CD14-positive monocyte (primary cell): ENCODE measurements at regions of chr19 and their contacts with region 1.

Region 1: DNA sequence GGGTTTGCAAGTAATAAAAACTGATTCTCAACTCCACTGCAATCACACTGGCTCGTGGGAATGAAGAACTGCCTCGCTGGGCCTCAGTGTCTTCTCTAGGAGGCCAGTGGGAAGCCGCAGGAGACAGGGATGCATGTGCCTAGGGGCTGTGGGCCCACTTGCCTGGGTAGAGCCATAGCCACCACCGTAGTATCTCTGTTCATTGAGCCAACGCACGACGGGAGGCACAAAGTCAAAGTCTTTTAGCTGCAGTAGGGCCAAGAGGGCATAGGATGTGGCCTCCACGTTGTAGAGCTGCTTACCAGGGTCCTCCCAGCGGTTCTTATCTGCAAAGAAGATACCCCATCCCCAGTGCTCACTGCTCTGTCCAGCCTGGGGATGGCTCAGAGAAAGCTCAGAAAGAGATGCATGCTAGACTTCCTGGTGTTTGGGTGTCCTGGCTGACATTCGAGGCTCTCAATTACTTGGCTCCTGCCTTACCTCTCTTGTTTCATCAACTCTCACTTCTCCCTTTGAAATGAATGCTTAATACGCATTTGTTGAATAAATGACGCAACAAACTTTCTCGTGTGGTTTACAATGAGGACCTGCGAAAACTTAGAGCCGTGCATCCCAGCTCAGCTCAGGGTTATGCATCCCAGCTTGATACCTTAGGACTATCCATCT is 16.1 kb upstream of the TNFSF14 start:
- DNase-seq: peak in 2 of 3 donors; percentile 61 to 62
- H3K4me3 ChIP-seq: no peak overlapping the region
- H3K4me3 Mint-ChIP-seq: no peak overlapping the region
- H3K27ac ChIP-seq: no peak overlapping the region
- H3K27ac Mint-ChIP-seq: peak overlapping the region in 3 of 7 donors; percentile 42 to 59 (median 56)
- H3K4me1 ChIP-seq: peaks cover 17 to 22% of the 10 kb centered on the region in 2 donors
- H3K4me1 Mint-ChIP-seq: peaks cover 19% of the 10 kb centered on the region
- H3K27me3 ChIP-seq: peaks cover 8 to 18% of the 10 kb centered on the region in 2 donors
- H3K27me3 Mint-ChIP-seq: peaks cover 18 to 29% (median 28%) of the 10 kb centered on the region in 3 donors
- CTCF ChIP-seq: no peak

Region 2: DNA sequence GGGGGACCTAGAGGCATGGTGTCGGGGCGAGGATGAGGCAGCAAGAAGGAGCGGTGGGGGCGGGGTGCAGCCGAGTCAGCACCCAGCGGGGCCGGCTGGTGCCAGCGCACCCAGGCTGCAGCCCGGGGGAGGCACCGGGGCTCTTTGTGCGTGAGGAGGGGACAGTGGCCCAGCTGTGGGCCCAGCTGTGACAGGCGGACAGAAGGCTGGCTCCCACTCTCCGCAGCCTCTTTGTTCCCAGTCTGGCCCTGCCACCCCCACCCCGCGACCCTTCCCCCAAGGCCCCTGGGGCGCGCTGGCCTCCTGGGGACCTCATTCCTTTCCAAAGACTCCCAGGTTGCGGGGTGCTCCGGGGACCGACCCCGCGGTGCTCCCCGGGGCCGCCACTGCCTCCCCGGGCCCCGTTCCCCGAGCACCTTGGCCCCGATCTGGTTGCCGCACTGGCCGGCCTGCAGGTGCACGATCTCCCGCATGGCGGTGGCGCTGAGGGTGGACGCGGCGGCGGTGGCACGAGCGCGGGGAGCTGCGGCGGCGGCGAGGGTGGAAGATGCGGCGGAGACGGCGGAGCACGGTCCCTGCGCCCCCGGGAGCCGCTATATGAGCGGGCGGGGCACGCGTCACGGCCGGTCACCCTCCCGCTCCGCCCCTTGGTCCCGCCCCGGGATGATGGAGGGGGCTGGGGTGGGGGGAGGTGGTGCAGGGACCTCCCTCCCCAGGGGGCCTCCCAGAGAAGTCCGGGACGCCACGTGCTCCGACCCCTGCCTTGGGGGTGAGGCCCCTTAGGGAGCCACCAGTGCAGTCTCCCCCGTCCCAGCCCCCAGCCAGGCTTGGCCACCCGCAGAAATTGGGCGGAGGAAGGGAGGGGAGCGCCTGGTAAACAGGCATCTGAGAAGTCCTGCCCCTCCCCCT is 184.1 kb before region 1 on chr19 and contains the start of gene TUBB4A:
- intact Hi-C with region 1: no loop called
- DNase-seq: no peak
- H3K4me3 ChIP-seq: peak within 1 kb of the TSS in 1 of 3 experiments; percentile 32
- H3K4me3 Mint-ChIP-seq: peak within 1 kb of the TSS; percentile 60 to 88
- H3K27ac ChIP-seq: no peak within 1 kb of the TSS
- H3K27ac Mint-ChIP-seq: peak within 1 kb of the TSS in 1 of 7 donors; percentile 40
- H3K4me1 ChIP-seq: peaks cover 13 to 31% of the 10 kb centered on the region in 2 donors
- H3K4me1 Mint-ChIP-seq: peaks cover 23% of the 10 kb centered on the region
- H3K27me3 ChIP-seq: peaks cover 24 to 44% of the 10 kb centered on the region in 2 donors
- H3K27me3 Mint-ChIP-seq: peaks cover 39 to 59% (median 57%) of the 10 kb centered on the region in 3 donors
- CTCF ChIP-seq: no peak
- polyA plus RNA-seq, gene TUBB4A: 0.16 TPM in 1 of 3 donors, not detected in the others

Region 3: DNA sequence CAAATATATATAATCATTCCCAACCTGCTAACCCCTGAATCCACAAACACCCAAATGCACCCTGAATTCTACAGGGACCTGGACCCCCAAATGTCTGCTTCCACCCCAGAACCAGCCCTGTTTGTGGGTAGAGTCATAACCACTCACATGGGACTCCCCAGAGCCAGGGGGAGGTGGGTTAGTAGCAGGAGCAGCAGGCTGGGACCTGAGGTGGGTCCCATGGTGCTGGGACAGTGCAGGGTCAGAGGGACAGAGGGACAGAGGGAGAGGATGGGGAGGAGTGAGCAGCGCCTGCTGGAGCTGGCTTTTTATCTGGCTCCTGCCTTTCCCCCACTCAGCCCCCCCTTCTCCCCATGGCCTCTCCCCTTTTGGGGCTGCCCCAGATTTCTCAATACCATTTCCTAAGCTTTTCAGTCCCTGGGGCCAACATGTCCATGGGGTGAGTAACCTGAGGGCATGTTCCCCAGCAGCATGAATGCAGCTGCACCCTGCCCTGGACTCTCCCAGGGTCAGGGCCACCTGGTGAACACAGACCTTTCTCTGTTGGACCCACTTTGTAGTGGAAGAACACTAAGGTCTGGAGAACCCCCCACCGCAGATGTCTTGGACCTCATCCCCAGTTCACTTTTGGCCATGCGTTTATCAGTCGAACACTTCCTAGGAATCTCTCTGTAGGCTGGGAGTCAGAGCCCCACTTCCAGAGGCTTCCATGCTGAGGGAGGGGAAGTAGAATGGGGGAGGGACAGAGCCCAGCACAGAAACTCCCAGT is 34.5 kb after region 1 on chr19 and contains the start of gene C3:
- intact Hi-C with region 1: loop called in 1 of 2 experiments (anchors 5 kb)
- DNase-seq: peak; percentile 83 to 96 (median 85)
- H3K4me3 ChIP-seq: peak within 1 kb of the TSS in 1 of 3 experiments; percentile 58
- H3K4me3 Mint-ChIP-seq: peak within 1 kb of the TSS; percentile 16 to 82
- H3K27ac ChIP-seq: peak within 1 kb of the TSS; percentile 37 to 72
- H3K27ac Mint-ChIP-seq: peak within 1 kb of the TSS; percentile 34 to 92 (median 87)
- H3K4me1 ChIP-seq: peaks cover 57 to 66% of the 10 kb centered on the region in 2 donors
- H3K4me1 Mint-ChIP-seq: peaks cover 60% of the 10 kb centered on the region
- H3K27me3 ChIP-seq: peaks cover 0 to 3% of the 10 kb centered on the region in 2 donors
- H3K27me3 Mint-ChIP-seq: peaks cover 9 to 17% (median 12%) of the 10 kb centered on the region in 3 donors
- CTCF ChIP-seq: no peak
- polyA plus RNA-seq, gene C3: 2.4 to 5.3 (median 3.2) TPM